ENCODE measurements at regions of chr1 and their contacts with region 1.

Region 1: GRCh38 chr1:72540687-72541086 is 258.3 kb upstream of the NEGR1 start:
- DNase-seq: no peak
- H3K4me3 ChIP-seq: no peak overlapping the region
- H3K27ac ChIP-seq: no peak overlapping the region
- H3K4me1 ChIP-seq: no peaks in the 10 kb centered on the region
- H3K27me3 ChIP-seq: no peaks in the 10 kb centered on the region
- CTCF ChIP-seq: no peak
- POLR2A ChIP-seq: no peak

Region 2: GRCh38 chr1:72397786-72398185 is 142.9 kb before region 1 on chr1:
- intact Hi-C with region 1: no loop called
- DNase-seq: no peak
- H3K4me3 ChIP-seq: no peak overlapping the region
- H3K27ac ChIP-seq: no peak overlapping the region
- H3K4me1 ChIP-seq: no peaks in the 10 kb centered on the region
- H3K27me3 ChIP-seq: no peaks in the 10 kb centered on the region
- CTCF ChIP-seq: no peak
- POLR2A ChIP-seq: no peak

Region 3: DNA sequence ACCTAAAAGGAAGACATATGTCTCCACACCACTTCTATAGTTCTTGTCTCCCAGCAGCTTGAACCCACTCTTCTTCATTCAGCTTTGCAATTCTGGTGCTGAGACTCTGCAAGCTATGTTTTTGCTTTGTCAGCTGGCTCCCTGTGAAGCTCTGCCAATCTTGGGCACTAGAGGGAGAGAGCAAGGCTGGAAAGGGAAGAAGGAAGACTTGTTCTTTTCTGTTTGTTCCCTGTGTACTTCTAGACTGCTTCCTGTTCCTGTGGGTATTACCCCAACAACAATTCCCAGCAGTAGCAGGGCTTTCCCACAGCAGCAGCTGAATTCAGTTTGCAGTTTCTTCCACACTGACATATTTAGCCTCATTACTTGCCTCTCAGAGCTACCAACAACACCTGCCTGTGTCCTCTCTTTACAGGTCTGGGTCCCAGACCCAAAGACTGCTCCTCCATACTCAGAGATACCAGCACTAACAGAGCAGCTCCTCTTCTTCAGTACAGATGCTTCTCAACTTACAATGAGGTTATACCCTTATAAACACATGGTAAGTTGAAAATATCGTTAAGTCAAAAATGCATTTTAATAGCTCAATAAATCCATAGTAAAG is 16.9 kb after region 1 on chr1:
- intact Hi-C with region 1: loop called (anchors 2 kb)
- DNase-seq: no peak
- H3K4me3 ChIP-seq: no peak overlapping the region
- H3K27ac ChIP-seq: no peak overlapping the region
- H3K4me1 ChIP-seq: no peaks in the 10 kb centered on the region
- H3K27me3 ChIP-seq: no peaks in the 10 kb centered on the region
- CTCF ChIP-seq: no peak
- POLR2A ChIP-seq: no peak

Region 4: GRCh38 chr1:72690871-72691270 is 150.2 kb after region 1 on chr1:
- intact Hi-C with region 1: no loop called
- DNase-seq: no peak
- H3K4me3 ChIP-seq: no peak overlapping the region
- H3K27ac ChIP-seq: no peak overlapping the region
- H3K4me1 ChIP-seq: no peaks in the 10 kb centered on the region
- H3K27me3 ChIP-seq: no peaks in the 10 kb centered on the region
- CTCF ChIP-seq: no peak
- POLR2A ChIP-seq: no peak

Measured in uterus (tissue), 4 donors.